PC-3 (cell line): ENCODE measurements at regions of chr11 and their contacts with region 1.

Region 1: DNA sequence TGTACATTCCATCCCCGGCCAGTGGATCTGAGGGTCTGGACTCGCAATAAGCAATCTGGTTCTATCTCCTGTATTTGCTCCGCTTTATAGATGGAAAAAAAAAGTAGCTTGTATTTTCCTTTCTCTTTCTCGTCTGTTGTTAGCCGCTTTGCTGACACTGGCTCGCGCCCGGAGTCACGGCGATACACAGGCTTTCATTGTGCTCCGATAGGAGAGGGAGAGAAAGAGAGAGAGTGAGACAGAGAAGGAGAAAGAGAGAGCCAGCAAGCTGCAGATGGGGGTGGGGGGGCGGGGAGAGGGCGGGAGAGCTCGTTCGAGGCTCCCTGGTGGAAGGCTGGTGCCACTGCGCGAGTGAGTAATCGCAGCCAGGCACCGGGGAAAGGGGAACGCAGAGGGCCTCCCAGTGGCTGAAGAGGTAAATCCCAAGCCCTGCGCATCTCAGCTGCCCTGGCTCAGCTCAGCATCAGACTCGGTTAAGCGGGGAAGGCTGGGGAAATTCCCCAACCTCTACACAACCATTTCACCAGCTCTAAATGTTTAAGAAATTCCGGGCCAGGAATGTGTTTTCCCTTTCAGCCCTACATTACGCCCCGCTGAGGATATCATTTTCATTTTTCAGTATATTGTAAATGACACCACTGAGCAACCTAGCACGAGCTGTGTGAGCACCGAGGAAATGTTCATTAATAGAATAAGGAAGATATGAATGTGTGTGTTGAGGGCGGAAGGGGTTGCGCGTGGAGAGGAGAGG is at the start of gene MAML2:
- DNase-seq: peak; percentile 98
- ATAC-seq: peak; percentile 87
- H3K4me3 ChIP-seq: peak within 1 kb of the TSS; percentile 89
- H3K27ac ChIP-seq: peak within 1 kb of the TSS; percentile 69
- H3K4me1 ChIP-seq: peaks cover 36% of the 10 kb centered on the region
- H3K27me3 ChIP-seq: no peaks in the 10 kb centered on the region
- CTCF ChIP-seq: peak; percentile 79
- total RNA-seq, gene MAML2: 10.3 and 10.9 TPM in 2 replicates

Region 2: GRCh38 chr11:95923728-95924413 is 419.3 kb before region 1 on chr11 and contains the start of gene MTMR2:
- CTCF ChIA-PET with region 1: interaction called, 4 read pairs
- POLR2A ChIA-PET with region 1: no interaction called
- intact Hi-C with region 1: loop called (anchors 2 kb)
- DNase-seq: peak; percentile 69
- ATAC-seq: peak; percentile 82
- H3K4me3 ChIP-seq: peak within 1 kb of the TSS; percentile 85
- H3K27ac ChIP-seq: peak within 1 kb of the TSS; percentile 81
- H3K4me1 ChIP-seq: peaks cover 26% of the 10 kb centered on the region
- H3K27me3 ChIP-seq: no peaks in the 10 kb centered on the region
- CTCF ChIP-seq: no peak
- total RNA-seq, gene MTMR2: 31.7 and 32.2 TPM in 2 replicates

Region 3: GRCh38 chr11:96054870-96055705 is 288.0 kb before region 1 on chr11:
- CTCF ChIA-PET with region 1: interaction called, 30 read pairs
- POLR2A ChIA-PET with region 1: interaction called, 14 read pairs
- intact Hi-C with region 1: loop called (anchors 1 kb)
- DNase-seq: peak; percentile 77
- ATAC-seq: peak; percentile 62
- H3K4me3 ChIP-seq: no peak overlapping the region
- H3K27ac ChIP-seq: peak overlapping the region; percentile 54
- H3K4me1 ChIP-seq: peaks cover 45% of the 10 kb centered on the region
- H3K27me3 ChIP-seq: no peaks in the 10 kb centered on the region
- CTCF ChIP-seq: peak; percentile 86

Region 4: GRCh38 chr11:96168623-96169022 is 174.5 kb before region 1 on chr11:
- CTCF ChIA-PET with region 1: no interaction called
- POLR2A ChIA-PET with region 1: no interaction called
- intact Hi-C with region 1: loop called (anchors 5 kb)
- DNase-seq: peak; percentile 67
- ATAC-seq: peak; percentile 69
- H3K4me3 ChIP-seq: no peak overlapping the region
- H3K27ac ChIP-seq: no peak overlapping the region
- H3K4me1 ChIP-seq: peaks cover 15% of the 10 kb centered on the region
- H3K27me3 ChIP-seq: no peaks in the 10 kb centered on the region
- CTCF ChIP-seq: no peak

Region 5: GRCh38 chr11:96242971-96243647 is 100.0 kb before region 1 on chr11:
- CTCF ChIA-PET with region 1: interaction called, 24 read pairs
- POLR2A ChIA-PET with region 1: interaction called, 5 read pairs
- intact Hi-C with region 1: loop called (anchors 1 kb)
- DNase-seq: peak; percentile 95
- ATAC-seq: peak; percentile 97
- H3K4me3 ChIP-seq: peak overlapping the region; percentile 58
- H3K27ac ChIP-seq: peak overlapping the region; percentile 80
- H3K4me1 ChIP-seq: peaks cover 43% of the 10 kb centered on the region
- H3K27me3 ChIP-seq: no peaks in the 10 kb centered on the region
- CTCF ChIP-seq: no peak

Region 6: GRCh38 chr11:96306933-96307775 is 36.0 kb before region 1 on chr11:
- CTCF ChIA-PET with region 1: interaction called, 11 read pairs
- POLR2A ChIA-PET with region 1: interaction called, 11 read pairs
- intact Hi-C with region 1: loop called (anchors 1 kb)
- DNase-seq: peak; percentile 100
- ATAC-seq: peak; percentile 68
- H3K4me3 ChIP-seq: peak overlapping the region; percentile 60
- H3K27ac ChIP-seq: peak overlapping the region; percentile 96
- H3K4me1 ChIP-seq: peaks cover 90% of the 10 kb centered on the region
- H3K27me3 ChIP-seq: no peaks in the 10 kb centered on the region
- CTCF ChIP-seq: no peak

Region 7: GRCh38 chr11:96538104-96538503 is 195.0 kb after region 1 on chr11:
- CTCF ChIA-PET with region 1: no interaction called
- POLR2A ChIA-PET with region 1: no interaction called
- intact Hi-C with region 1: no loop called
- DNase-seq: no peak
- ATAC-seq: no peak
- H3K4me3 ChIP-seq: no peak overlapping the region
- H3K27ac ChIP-seq: no peak overlapping the region
- H3K4me1 ChIP-seq: no peaks in the 10 kb centered on the region
- H3K27me3 ChIP-seq: peaks cover 24% of the 10 kb centered on the region
- CTCF ChIP-seq: no peak